ENCODE measurements at regions of chr12 and their contacts with region 1.

Region 1: GRCh38 chr12:89949457-89950195 is 241.0 kb upstream of the ATP2B1 start:
- DNase-seq: peak; percentile 90
- ATAC-seq: peak; percentile 65
- H3K4me3 ChIP-seq: peak overlapping the region in 3 of 5 experiments; percentile 9 to 47 (median 12)
- H3K4me3 Mint-ChIP-seq: peak overlapping the region; percentile 68
- H3K27ac ChIP-seq: peak overlapping the region; percentile 81 to 98
- H3K27ac Mint-ChIP-seq: peak overlapping the region; percentile 81
- H3K4me1 ChIP-seq: peaks cover 44 to 47% of the 10 kb centered on the region in 2 donors
- H3K4me1 Mint-ChIP-seq: peaks cover 60% of the 10 kb centered on the region
- H3K27me3 ChIP-seq: no peaks in the 10 kb centered on the region
- H3K27me3 Mint-ChIP-seq: no peaks in the 10 kb centered on the region
- CTCF ChIP-seq: peak; percentile 70

Region 2: DNA sequence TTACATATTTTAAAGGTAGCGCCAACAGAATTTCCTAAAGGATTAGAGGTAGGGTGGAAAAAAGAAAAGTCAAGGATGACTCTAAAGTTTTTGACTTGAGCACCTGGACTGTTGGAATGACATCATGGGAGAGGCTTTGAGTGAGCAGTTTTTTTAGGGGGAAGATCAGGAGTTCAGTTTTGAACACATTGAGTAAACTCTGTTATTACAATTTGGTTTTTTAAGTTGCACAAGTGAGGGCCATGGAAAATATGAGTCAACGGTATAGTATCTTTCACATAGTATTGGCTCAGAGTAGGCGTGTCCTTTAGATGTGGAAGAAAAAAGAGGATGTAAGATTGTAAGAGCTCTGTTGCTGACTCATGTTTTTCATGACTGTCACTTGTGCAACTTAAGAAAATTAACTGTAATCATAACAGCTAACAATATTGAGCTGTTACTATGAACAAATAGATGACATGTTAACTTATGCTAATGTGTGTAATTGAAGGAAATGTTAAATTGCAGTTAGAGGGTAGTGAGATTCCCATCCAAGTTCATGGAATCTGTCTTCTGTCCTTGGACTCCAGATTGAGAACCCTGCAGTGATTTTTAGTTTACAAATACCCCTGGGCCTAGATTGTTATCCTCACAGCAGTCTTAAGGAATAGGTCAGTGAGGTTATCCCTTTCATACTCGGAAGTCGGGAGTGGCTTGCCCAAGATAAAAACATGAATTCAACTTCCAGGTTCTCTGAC is 192.9 kb before region 1 on chr12:
- CTCF ChIA-PET with region 1: no interaction called
- POLR2A ChIA-PET with region 1: no interaction called
- intact Hi-C with region 1: loop called (anchors 1 kb)
- DNase-seq: peak; percentile 69
- ATAC-seq: peak; percentile 78
- H3K4me3 ChIP-seq: no peak overlapping the region
- H3K4me3 Mint-ChIP-seq: peak overlapping the region; percentile 33
- H3K27ac ChIP-seq: peak overlapping the region; percentile 14 to 67
- H3K27ac Mint-ChIP-seq: peak overlapping the region; percentile 92
- H3K4me1 ChIP-seq: peaks cover 44 to 47% of the 10 kb centered on the region in 2 donors
- H3K4me1 Mint-ChIP-seq: peaks cover 55% of the 10 kb centered on the region
- H3K27me3 ChIP-seq: no peaks in the 10 kb centered on the region
- H3K27me3 Mint-ChIP-seq: no peaks in the 10 kb centered on the region
- CTCF ChIP-seq: no peak

Region 3: DNA sequence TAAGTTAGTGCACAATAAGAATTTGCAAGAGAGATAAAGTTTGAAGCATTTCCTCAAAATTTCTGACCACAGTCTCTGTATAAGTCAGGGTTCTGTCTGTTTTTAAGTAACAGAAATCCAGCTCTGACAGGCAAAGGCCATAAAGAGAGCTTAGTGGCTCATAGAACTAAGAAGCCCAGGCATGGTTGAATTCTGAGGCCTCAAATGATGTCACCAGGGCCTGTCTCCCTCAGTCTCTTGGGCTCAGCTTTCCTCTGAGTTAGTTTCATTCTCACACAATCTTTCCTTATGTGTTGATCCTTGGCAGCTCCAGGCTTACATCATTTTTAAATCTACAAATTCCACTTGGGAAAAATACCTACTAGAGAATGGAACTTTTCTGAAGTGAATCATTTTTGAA is 67.6 kb before region 1 on chr12:
- CTCF ChIA-PET with region 1: interaction called, 7 read pairs
- POLR2A ChIA-PET with region 1: interaction called, 3 read pairs
- intact Hi-C with region 1: loop called (anchors 1 kb)
- DNase-seq: peak; percentile 58
- ATAC-seq: peak; percentile 22
- H3K4me3 ChIP-seq: peak overlapping the region in 1 of 5 experiments; percentile 3
- H3K4me3 Mint-ChIP-seq: peak overlapping the region; percentile 89
- H3K27ac ChIP-seq: peak overlapping the region; percentile 94 to 95
- H3K27ac Mint-ChIP-seq: peak overlapping the region; percentile 99
- H3K4me1 ChIP-seq: peaks cover 45 to 52% of the 10 kb centered on the region in 2 donors
- H3K4me1 Mint-ChIP-seq: peaks cover 52% of the 10 kb centered on the region
- H3K27me3 ChIP-seq: no peaks in the 10 kb centered on the region
- H3K27me3 Mint-ChIP-seq: no peaks in the 10 kb centered on the region
- CTCF ChIP-seq: no peak

Region 4: GRCh38 chr12:89935825-89936224 is 13.8 kb before region 1 on chr12:
- CTCF ChIA-PET with region 1: interaction called, 19 read pairs
- POLR2A ChIA-PET with region 1: no interaction called
- intact Hi-C with region 1: loop called (anchors 1 kb)
- DNase-seq: peak; percentile 40
- ATAC-seq: peak; percentile 64
- H3K4me3 ChIP-seq: no peak overlapping the region
- H3K4me3 Mint-ChIP-seq: peak overlapping the region; percentile 71
- H3K27ac ChIP-seq: peak overlapping the region; percentile 50 to 54
- H3K27ac Mint-ChIP-seq: peak overlapping the region; percentile 91
- H3K4me1 ChIP-seq: peaks cover 25 to 37% of the 10 kb centered on the region in 2 donors
- H3K4me1 Mint-ChIP-seq: peaks cover 63% of the 10 kb centered on the region
- H3K27me3 ChIP-seq: no peaks in the 10 kb centered on the region
- H3K27me3 Mint-ChIP-seq: no peaks in the 10 kb centered on the region
- CTCF ChIP-seq: no peak

Region 5: GRCh38 chr12:89992668-89993451 is 43.2 kb after region 1 on chr12:
- CTCF ChIA-PET with region 1: no interaction called
- POLR2A ChIA-PET with region 1: no interaction called
- intact Hi-C with region 1: loop called (anchors 5 kb)
- DNase-seq: no peak
- ATAC-seq: no peak
- H3K4me3 ChIP-seq: no peak overlapping the region
- H3K4me3 Mint-ChIP-seq: peak overlapping the region; percentile 7
- H3K27ac ChIP-seq: no peak overlapping the region
- H3K27ac Mint-ChIP-seq: no peak overlapping the region
- H3K4me1 ChIP-seq: peaks cover 12 to 23% of the 10 kb centered on the region in 2 donors
- H3K4me1 Mint-ChIP-seq: peaks cover 32% of the 10 kb centered on the region
- H3K27me3 ChIP-seq: no peaks in the 10 kb centered on the region
- H3K27me3 Mint-ChIP-seq: no peaks in the 10 kb centered on the region
- CTCF ChIP-seq: no peak